SK-N-SH (cell line): ENCODE measurements at regions of chr1 and their contacts with region 1.

Region 1: GRCh38 chr1:159132271-159132881 is 39.0 kb upstream of the CADM3 start:
- DNase-seq: peak; percentile 47
- H3K4me3 ChIP-seq: no peak overlapping the region; a peak in 1 of 4 replicates
- H3K27ac ChIP-seq: no peak overlapping the region
- H3K4me1 ChIP-seq: no peaks in the 10 kb centered on the region
- H3K27me3 ChIP-seq: peaks cover 23% of the 10 kb centered on the region; the same call in 1 of the 2 replicates
- CTCF ChIP-seq: peak; percentile 97
- EP300 ChIP-seq: no peak
- RAD21 ChIP-seq: peak; percentile 86

Region 2: DNA sequence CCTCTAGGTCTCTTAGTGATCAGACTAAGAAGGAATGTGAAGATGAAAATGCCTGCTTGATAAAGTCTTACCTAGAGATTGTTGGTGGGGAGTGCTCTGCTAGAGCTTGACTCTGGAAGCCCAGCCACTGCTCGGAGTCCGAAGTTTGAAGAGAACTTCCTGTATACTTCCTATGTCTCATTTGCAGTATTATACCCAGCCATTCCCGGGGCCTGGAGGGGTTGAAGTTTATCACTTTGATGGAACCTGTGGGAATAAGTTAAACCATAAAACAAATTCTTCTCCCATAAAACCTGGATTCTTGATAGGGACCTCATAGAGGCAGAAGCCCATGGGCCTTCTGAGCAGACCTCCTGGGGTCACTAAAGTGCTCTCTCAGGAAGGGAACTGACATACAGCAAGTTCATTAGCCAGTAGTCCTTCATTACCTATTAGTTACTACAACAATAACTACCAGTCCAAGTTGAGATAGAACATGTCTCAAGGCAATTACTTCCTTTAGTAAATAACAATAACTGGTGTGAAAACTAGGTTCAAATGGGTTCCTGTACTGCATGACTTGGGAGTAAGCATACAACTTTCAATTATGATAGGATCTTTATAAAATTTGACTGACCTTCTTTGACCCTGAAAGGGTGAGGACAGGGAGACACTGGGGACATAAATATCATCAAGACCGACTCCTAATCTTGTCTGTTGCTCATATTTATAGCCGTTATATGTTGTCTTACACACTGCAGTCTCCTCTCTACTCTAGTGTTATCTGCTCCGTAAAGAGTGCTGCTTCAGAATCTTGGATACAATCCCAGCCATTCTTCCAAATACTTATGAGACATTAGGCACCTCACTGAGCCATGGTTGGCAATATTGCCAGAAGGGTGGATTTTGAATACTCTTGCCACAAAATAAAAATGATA is 360.2 kb before region 1 on chr1 and contains the start of gene OR6N1:
- CTCF ChIA-PET with region 1: no interaction called
- POLR2A ChIA-PET with region 1: no interaction called
- DNase-seq: no peak
- H3K4me3 ChIP-seq: no peak within 1 kb of the TSS
- H3K27ac ChIP-seq: no peak within 1 kb of the TSS
- H3K4me1 ChIP-seq: no peaks in the 10 kb centered on the region
- H3K27me3 ChIP-seq: no peaks in the 10 kb centered on the region
- CTCF ChIP-seq: no peak
- EP300 ChIP-seq: no peak
- RAD21 ChIP-seq: no peak
- polyA plus RNA-seq, gene OR6N1: not detected in 2 replicates

Region 3: GRCh38 chr1:159009704-159010361 is 122.5 kb before region 1 on chr1 and contains the start of gene IFI16:
- CTCF ChIA-PET with region 1: no interaction called
- POLR2A ChIA-PET with region 1: no interaction called
- DNase-seq: no peak
- H3K4me3 ChIP-seq: peak within 1 kb of the TSS; percentile 63 to 74
- H3K27ac ChIP-seq: peak within 1 kb of the TSS; percentile 95 to 97
- H3K4me1 ChIP-seq: peaks cover 0 to 12% of the 10 kb centered on the region in 2 experiments; a peak in 3 of 4 replicates
- H3K27me3 ChIP-seq: no peaks in the 10 kb centered on the region
- CTCF ChIP-seq: no peak
- EP300 ChIP-seq: peak in 1 of 2 experiments; percentile 31; a peak in 1 of 4 replicates
- RAD21 ChIP-seq: no peak
- polyA plus RNA-seq, gene IFI16: 56.1 and 72.4 TPM in 2 replicates

Region 4: DNA sequence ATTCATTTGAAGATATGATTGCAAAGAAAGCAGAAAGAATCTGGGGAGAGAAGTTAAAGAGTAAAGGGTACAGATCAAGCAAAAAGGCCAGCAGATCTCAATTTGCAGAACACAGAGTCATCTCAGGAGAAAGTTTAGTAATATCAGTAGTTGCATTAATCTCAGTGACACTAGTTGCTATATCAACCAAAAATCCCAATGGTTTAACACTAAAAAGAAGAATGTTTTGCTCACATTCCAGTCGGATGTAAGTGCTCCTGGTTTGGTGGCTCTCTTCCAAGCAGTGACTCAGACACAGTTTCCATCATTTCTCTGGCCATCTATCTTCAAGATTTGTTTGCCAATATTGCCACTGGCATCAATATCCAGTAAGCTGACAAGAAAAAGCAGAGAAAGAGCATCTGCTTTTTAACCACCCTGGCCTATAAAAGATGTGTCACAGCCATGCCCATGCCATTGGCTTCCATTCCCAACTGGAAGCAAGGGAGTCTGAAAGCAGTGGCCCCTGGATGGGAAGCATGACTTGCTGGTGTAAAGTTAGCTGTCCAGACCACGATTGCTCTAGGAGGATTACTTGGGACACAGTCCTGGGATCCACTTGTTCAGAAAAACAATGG is 10.3 kb before region 1 on chr1:
- CTCF ChIA-PET with region 1: interaction called, 15 read pairs
- POLR2A ChIA-PET with region 1: no interaction called
- DNase-seq: no peak
- H3K4me3 ChIP-seq: no peak overlapping the region
- H3K27ac ChIP-seq: no peak overlapping the region; a peak in 1 of 4 replicates
- H3K4me1 ChIP-seq: no peaks in the 10 kb centered on the region; a peak in 1 of 4 replicates
- H3K27me3 ChIP-seq: peaks cover 24% of the 10 kb centered on the region; the same call in 1 of the 2 replicates
- CTCF ChIP-seq: no peak
- EP300 ChIP-seq: no peak
- RAD21 ChIP-seq: no peak

Region 5: GRCh38 chr1:159168043-159168442 is 35.7 kb after region 1 on chr1:
- CTCF ChIA-PET with region 1: interaction called, 42 read pairs
- POLR2A ChIA-PET with region 1: no interaction called
- DNase-seq: no peak
- H3K4me3 ChIP-seq: no peak overlapping the region
- H3K27ac ChIP-seq: no peak overlapping the region
- H3K4me1 ChIP-seq: peaks cover 0 to 13% of the 10 kb centered on the region in 2 experiments; a peak in 1 of 4 replicates
- H3K27me3 ChIP-seq: peaks cover 48% of the 10 kb centered on the region
- CTCF ChIP-seq: no peak
- EP300 ChIP-seq: no peak
- RAD21 ChIP-seq: no peak

Region 6: GRCh38 chr1:159197561-159198557 is 65.5 kb after region 1 on chr1:
- CTCF ChIA-PET with region 1: interaction called, 481 read pairs
- POLR2A ChIA-PET with region 1: no interaction called
- DNase-seq: peak; percentile 80
- H3K4me3 ChIP-seq: no peak overlapping the region; a peak in 1 of 4 replicates
- H3K27ac ChIP-seq: no peak overlapping the region
- H3K4me1 ChIP-seq: peaks cover 0 to 2% of the 10 kb centered on the region in 2 experiments; a peak in 1 of 4 replicates
- H3K27me3 ChIP-seq: peaks cover 5% of the 10 kb centered on the region; the same call in 1 of the 2 replicates
- CTCF ChIP-seq: peak; percentile 83
- EP300 ChIP-seq: no peak
- RAD21 ChIP-seq: peak; percentile 82

Region 7: GRCh38 chr1:159229486-159229885 is 97.1 kb after region 1 on chr1:
- CTCF ChIA-PET with region 1: interaction called, 13 read pairs
- POLR2A ChIA-PET with region 1: no interaction called
- DNase-seq: peak; percentile 62
- H3K4me3 ChIP-seq: no peak overlapping the region
- H3K27ac ChIP-seq: peak overlapping the region; percentile 21 to 75; a peak in 3 of 4 replicates
- H3K4me1 ChIP-seq: peaks cover 0 to 13% of the 10 kb centered on the region in 2 experiments; a peak in 2 of 4 replicates
- H3K27me3 ChIP-seq: no peaks in the 10 kb centered on the region; the same call in 1 of the 2 replicates
- CTCF ChIP-seq: no peak
- EP300 ChIP-seq: no peak
- RAD21 ChIP-seq: no peak

Region 8: GRCh38 chr1:159352436-159352835 is 220.1 kb after region 1 on chr1:
- CTCF ChIA-PET with region 1: no interaction called
- POLR2A ChIA-PET with region 1: no interaction called
- DNase-seq: no peak
- H3K4me3 ChIP-seq: no peak overlapping the region
- H3K27ac ChIP-seq: no peak overlapping the region
- H3K4me1 ChIP-seq: no peaks in the 10 kb centered on the region
- H3K27me3 ChIP-seq: no peaks in the 10 kb centered on the region
- CTCF ChIP-seq: no peak
- EP300 ChIP-seq: no peak
- RAD21 ChIP-seq: no peak